HCT116 (cell line): ENCODE measurements at regions of chr19 and their contacts with region 1.

Region 1: DNA sequence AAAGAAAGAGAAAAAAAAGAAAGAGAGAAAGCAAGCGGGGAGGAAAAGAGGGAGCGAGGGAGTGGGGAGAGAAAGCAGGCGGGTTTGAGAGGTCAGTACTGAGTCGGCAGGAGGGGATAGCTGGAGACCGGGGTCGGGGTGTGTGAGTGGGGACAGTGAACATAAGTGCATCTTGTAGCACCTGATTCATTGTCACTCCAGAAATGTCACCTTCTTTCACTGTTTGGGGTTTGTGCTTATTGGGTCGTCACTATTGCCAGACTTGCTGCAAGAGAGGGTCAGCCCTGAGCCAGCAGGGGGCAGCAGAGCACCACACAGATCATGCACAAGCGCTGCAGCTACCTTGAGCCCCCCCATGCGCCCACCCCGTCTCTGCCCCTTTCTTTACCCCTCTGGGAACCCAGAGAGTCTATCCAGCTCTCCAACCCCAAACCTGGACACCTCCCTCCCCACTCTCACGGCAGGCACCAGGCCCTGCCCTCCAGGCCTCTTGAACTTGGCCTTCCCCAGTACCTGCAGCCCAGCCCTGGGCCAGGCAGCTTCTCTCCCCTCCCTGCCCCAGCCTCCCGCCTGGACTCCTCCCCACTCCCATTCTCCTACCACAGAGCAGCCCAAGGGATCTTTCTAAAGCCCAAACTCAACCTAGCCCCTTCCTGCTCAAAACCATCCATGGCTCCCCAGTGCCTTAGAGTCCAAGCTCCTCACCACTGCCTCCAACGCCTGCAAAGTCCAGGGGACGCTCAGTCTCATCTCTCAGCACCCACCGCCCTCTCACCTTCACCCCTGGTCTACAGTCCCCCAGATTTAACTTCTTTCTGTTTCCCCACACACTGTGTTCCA is 9.7 kb upstream of the CEACAM16 start:
- DNase-seq: peak; percentile 50
- ATAC-seq: peak; percentile 60
- H3K4me3 ChIP-seq: no peak overlapping the region
- H3K27ac ChIP-seq: peak overlapping the region; percentile 43; the same call in 1 of the 2 replicates
- H3K4me1 ChIP-seq: peaks cover 48 to 70% of the 10 kb centered on the region in 2 experiments
- H3K27me3 ChIP-seq: no peaks in the 10 kb centered on the region
- CTCF ChIP-seq: peak; percentile 68 to 97 (median 95)
- POLR2A ChIP-seq: no peak
- RAD21 ChIP-seq: peak; percentile 92

Region 2: DNA sequence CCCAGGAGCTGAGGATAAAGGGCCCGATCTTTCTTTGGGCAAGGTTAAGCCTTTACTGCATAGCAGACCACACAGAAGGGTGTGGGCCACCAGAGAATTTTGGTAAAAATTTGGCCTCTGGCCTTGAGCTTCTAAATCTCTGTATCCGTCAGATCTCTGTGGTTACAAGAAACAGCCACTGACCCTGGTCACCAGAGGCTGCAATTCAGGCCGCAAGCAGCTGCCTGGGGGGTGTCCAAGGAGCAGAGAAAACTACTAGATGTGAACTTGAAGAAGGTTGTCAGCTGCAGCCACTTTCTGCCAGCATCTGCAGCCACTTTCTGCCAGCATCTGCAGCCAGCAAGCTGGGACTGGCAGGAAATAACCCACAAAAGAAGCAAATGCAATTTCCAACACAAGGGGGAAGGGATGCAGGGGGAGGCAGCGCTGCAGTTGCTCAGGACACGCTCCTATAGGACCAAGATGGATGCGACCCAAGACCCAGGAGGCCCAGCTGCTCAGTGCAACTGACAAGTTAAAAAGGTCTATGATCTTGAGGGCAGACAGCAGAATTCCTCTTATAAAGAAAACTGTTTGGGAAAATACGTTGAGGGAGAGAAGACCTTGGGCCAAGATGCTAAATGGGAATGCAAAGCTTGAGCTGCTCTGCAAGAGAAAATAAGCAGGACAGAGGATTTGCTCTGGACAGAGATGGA is 26.4 kb before region 1 on chr19:
- CTCF ChIA-PET with region 1: no interaction called
- POLR2A ChIA-PET with region 1: no interaction called
- RAD21 ChIA-PET with region 1: no interaction called
- intact Hi-C with region 1: no loop called
- DNase-seq: no peak
- ATAC-seq: no peak
- H3K4me3 ChIP-seq: no peak overlapping the region
- H3K27ac ChIP-seq: no peak overlapping the region
- H3K4me1 ChIP-seq: peaks cover 0 to 6% of the 10 kb centered on the region in 2 experiments; a peak in 1 of 4 replicates
- H3K27me3 ChIP-seq: no peaks in the 10 kb centered on the region
- CTCF ChIP-seq: no peak
- POLR2A ChIP-seq: no peak
- RAD21 ChIP-seq: no peak

Region 3: DNA sequence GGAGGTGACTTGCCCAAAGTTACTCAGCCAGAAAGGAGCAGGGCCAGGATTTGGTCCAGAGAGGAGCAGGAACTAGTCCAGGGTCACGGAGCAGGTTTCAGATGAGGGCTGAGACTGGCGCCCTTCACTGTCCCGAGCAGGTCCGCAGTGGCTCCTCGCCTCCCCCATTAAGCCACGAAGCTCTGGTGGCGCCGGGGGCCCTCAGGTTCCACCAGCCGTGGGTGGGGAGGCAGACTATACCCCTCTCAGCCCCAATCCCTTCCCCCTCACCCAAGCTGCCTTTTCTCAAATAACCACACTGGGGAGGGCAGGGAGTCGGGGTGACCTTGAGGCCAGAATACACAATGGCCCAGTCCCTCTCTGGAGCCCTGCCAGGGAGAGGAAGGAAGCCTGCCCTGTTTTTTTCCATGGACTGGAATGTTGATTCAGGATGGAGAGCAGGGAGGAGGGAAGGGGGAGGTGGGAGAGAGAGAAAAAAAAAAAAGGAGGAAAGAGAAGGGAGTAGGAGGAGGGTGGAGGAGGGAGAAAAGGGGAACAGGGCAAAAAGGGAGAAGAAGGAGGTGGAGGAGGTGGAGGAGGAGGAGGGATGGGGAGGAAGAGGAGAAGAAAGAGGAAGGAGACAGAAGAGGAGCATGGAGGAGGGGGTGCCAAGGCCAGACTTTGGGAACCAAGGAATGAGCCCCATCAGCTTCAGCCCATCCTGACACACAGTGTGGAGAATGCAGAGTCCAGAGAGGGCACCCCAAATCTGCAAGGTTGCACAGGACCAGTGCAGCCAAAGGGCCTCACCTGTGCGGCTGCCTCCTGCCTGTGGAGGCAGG is 29.4 kb after region 1 on chr19:
- CTCF ChIA-PET with region 1: interaction called, 15 read pairs
- POLR2A ChIA-PET with region 1: interaction called, 3 read pairs
- RAD21 ChIA-PET with region 1: interaction called, 5 to 7 read pairs
- intact Hi-C with region 1: no loop called
- DNase-seq: no peak
- ATAC-seq: peak; percentile 41
- H3K4me3 ChIP-seq: no peak overlapping the region
- H3K27ac ChIP-seq: peak overlapping the region; percentile 60
- H3K4me1 ChIP-seq: peaks cover 34 to 40% of the 10 kb centered on the region in 2 experiments
- H3K27me3 ChIP-seq: no peaks in the 10 kb centered on the region
- CTCF ChIP-seq: no peak
- POLR2A ChIP-seq: no peak
- RAD21 ChIP-seq: no peak

Region 4: DNA sequence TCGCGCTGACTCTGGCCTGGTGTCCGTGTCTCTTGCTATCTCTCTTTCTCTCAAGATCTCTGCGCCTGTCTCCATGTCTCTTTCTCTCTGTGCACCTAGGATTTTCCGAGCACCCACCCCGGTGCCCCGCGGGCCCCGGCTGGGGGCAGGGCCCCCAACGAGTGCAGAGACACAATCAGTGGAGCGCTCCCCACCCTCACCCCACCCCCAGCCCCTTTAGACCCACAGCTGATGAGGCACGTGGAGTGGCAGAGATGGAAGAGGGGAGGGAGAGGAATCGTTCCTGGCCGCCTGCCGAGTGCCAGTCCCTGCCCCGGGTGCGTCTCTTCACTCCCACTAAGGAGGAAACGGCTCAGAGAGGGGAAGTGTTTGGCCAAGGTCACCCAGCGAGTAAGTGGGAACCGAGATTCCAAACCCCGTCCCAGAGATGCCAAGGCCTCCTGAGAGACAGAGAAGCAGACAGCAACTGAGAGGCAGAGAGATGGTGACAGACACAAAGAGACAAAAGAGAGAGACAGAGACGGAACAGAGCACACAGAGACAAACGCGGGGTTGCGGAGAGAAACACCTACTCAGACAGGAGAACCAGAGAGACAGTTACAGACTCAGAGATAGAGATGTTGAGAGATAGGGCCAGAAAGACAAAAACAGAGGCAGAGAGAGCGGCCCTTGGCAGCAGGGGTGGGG is 58.6 kb after region 1 on chr19:
- CTCF ChIA-PET with region 1: no interaction called
- POLR2A ChIA-PET with region 1: no interaction called
- RAD21 ChIA-PET with region 1: no interaction called
- intact Hi-C with region 1: no loop called
- DNase-seq: no peak
- ATAC-seq: peak; percentile 37
- H3K4me3 ChIP-seq: peak overlapping the region; percentile 45 to 85
- H3K27ac ChIP-seq: peak overlapping the region; percentile 98
- H3K4me1 ChIP-seq: peaks cover 56 to 82% of the 10 kb centered on the region in 2 experiments
- H3K27me3 ChIP-seq: no peaks in the 10 kb centered on the region
- CTCF ChIP-seq: no peak
- POLR2A ChIP-seq: no peak
- RAD21 ChIP-seq: no peak